ENCODE measurements at regions of chr2 and their contacts with region 1.

Region 1: DNA sequence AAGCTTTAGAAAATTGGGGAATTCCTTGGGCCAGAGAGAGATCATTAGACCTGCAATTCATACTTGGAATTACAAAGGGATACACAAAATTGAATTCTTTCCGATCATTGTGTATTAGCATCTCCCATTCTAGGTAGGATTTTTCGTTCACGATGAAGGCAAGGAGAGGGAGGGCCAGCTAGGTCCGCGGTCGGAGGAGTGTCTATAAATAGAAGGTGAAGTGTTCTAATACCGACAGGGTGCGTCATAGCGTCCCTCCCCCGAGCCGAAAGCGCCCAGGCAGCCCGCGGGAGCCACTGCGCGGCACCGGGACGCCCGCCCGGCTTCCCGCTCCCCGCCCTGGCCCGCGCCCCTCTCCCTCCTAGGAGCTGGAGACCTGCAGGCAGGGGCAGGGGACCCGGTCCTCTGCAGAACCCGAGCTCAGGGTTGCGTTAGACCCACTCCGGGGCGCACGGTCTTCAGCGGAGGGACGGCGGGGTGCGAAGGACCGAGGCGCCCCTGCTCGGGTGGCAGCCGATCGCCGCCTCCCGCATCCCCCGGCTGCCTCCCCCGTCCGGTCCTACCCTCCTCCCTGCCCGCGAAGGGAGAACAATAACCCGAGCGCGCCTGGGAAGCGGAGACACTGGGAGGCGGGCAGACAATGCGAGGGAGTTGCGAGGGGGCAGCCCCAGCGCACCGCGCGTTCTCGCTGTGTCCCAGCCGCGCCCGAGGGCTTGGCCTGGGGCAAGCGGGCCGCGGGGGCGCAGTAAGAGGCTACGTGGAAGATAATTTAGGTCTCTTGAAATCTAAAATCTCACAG is 114.2 kb upstream of the SERTAD2 start:
- DNase-seq: peak; percentile 35 to 78 (median 55)
- ATAC-seq: peak; percentile 89
- H3K4me3 ChIP-seq: peak overlapping the region; percentile 80
- H3K4me3 Mint-ChIP-seq: peak overlapping the region; percentile 90 to 99 (median 96)
- H3K27ac ChIP-seq: peak overlapping the region; percentile 73
- H3K27ac Mint-ChIP-seq: peak overlapping the region; percentile 92 to 97 (median 95)
- H3K4me1 ChIP-seq: peaks cover 3 to 12% of the 10 kb centered on the region in 2 donors
- H3K4me1 Mint-ChIP-seq: peaks cover 9 to 40% (median 23%) of the 10 kb centered on the region in 7 donors
- H3K27me3 ChIP-seq: no peaks in the 10 kb centered on the region
- H3K27me3 Mint-ChIP-seq: peaks cover 0 to 15% (median 0%) of the 10 kb centered on the region in 5 donors

Region 2: GRCh38 chr2:64819774-64820696 is 52.2 kb after region 1 on chr2:
- CTCF ChIA-PET with region 1: interaction called, 3 read pairs
- POLR2A ChIA-PET with region 1: interaction called, 12 read pairs
- intact Hi-C with region 1: loop called (anchors 1 kb)
- DNase-seq: peak in 8 of 9 donors; percentile 36 to 81 (median 66)
- ATAC-seq: peak; percentile 95
- H3K4me3 ChIP-seq: peak overlapping the region; percentile 19
- H3K4me3 Mint-ChIP-seq: peak overlapping the region; percentile 46 to 88 (median 77)
- H3K27ac ChIP-seq: peak overlapping the region; percentile 59
- H3K27ac Mint-ChIP-seq: peak overlapping the region; percentile 87 to 97 (median 95)
- H3K4me1 ChIP-seq: peaks cover 19 to 25% of the 10 kb centered on the region in 2 donors
- H3K4me1 Mint-ChIP-seq: peaks cover 12 to 41% (median 31%) of the 10 kb centered on the region in 7 donors
- H3K27me3 ChIP-seq: no peaks in the 10 kb centered on the region
- H3K27me3 Mint-ChIP-seq: no peaks in the 10 kb centered on the region